ENCODE measurements at regions of chr10 and their contacts with region 1.

Region 1: DNA sequence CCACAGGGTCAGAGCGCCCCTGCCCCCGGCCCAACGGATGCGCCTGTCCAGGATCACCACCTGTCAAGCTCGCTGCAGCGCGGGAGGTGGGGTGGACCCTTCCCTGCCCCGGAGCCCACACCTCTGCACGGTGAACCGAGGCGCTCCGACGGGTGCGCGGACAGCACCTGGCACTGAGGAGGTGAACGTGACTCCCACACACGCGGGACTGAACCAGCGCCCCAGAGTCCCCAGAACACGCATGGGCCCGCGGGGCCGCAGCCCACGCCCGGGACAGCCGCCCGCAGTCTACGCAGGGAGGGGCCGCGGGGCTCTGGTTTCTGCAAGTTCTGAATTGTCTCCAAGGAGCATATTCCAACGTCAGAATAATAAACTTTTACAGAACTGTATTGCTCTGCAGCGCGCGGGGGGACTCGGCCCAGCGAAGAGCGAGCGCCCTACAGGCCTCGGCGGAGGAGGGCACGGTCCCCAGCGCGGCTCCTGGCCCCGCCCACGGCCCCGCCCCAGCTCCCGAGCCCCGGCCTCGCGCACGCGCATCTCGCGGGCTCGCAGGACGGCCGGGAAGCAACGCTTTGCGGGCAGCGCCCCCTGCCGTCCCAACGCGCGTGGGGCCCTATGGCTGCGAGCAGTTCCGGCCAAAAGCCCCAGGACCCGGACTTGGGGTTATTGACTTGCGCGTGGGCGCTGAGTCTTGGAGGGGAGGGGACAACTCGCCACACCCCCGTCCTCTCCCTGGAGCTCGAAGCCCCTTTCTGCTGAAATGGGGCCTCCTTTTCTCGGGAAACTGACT is 29.7 kb downstream of the OAT start:
- DNase-seq: peak; percentile 92
- H3K4me3 Mint-ChIP-seq: no peak overlapping the region
- H3K27ac Mint-ChIP-seq: no peak overlapping the region
- H3K4me1 Mint-ChIP-seq: peaks cover 4% of the 10 kb centered on the region
- H3K27me3 Mint-ChIP-seq: peaks cover 11% of the 10 kb centered on the region

Region 2: GRCh38 chr10:123994417-123995081 is 394.5 kb before region 1 on chr10:
- CTCF ChIA-PET with region 1: interaction called, 141 read pairs
- DNase-seq: peak; percentile 84
- H3K4me3 Mint-ChIP-seq: no peak overlapping the region
- H3K27ac Mint-ChIP-seq: no peak overlapping the region
- H3K4me1 Mint-ChIP-seq: peaks cover 5% of the 10 kb centered on the region
- H3K27me3 Mint-ChIP-seq: peaks cover 83% of the 10 kb centered on the region

Region 3: GRCh38 chr10:124279882-124280281 is 109.1 kb before region 1 on chr10:
- CTCF ChIA-PET with region 1: no interaction called
- DNase-seq: no peak
- H3K4me3 Mint-ChIP-seq: no peak overlapping the region
- H3K27ac Mint-ChIP-seq: no peak overlapping the region
- H3K4me1 Mint-ChIP-seq: no peaks in the 10 kb centered on the region
- H3K27me3 Mint-ChIP-seq: no peaks in the 10 kb centered on the region

Region 4: DNA sequence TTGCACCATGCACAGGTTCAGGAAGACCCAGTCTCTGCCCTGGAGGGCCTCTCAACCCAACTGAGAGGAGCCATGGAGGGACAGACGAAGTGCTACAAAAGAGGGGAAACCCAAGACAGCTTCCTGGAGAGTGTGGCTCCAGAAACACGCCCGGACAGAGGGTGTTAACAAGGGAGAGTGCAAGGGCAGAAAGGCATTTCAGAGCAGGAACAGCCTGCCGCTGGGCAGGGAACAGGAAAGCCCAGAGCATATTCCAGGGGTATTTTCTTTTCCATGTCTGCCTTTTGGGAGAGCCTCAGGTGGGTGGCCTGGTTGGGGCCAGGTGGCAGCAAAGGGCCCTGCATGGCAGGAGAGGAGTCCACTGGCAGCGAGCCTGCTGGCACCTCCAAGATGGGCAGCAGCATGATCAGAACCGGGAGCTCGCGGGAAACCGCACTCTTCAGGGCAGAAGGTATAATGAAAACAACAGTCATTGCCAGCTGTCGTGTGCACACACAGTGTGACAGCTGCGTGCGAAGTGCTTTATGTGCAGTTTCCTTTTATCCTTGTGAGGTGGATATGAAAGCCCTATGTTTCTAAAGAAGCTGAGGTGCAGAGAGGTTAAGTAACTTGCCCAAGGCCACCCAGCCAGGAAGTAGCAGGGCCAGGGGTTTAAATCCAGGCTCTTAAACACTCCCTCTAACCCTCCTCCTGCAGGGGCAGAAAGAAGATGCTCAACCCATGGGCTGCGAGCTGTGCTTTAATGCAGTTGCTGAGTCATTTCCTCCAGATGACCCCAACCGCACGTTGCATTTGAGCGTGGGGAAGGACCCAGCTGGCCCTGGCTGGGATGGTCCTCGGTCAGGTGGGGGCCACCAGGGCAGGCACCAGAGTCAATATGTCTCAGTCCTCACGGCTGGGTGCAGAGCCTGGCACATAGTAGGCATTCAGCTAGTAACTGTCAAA is 98.9 kb before region 1 on chr10:
- CTCF ChIA-PET with region 1: interaction called, 24 read pairs
- DNase-seq: no peak
- H3K4me3 Mint-ChIP-seq: no peak overlapping the region
- H3K27ac Mint-ChIP-seq: no peak overlapping the region
- H3K4me1 Mint-ChIP-seq: peaks cover 3% of the 10 kb centered on the region
- H3K27me3 Mint-ChIP-seq: no peaks in the 10 kb centered on the region

Region 5: GRCh38 chr10:124296121-124296812 is 92.8 kb before region 1 on chr10:
- CTCF ChIA-PET with region 1: interaction called, 24 read pairs
- DNase-seq: no peak
- H3K4me3 Mint-ChIP-seq: no peak overlapping the region
- H3K27ac Mint-ChIP-seq: no peak overlapping the region
- H3K4me1 Mint-ChIP-seq: no peaks in the 10 kb centered on the region
- H3K27me3 Mint-ChIP-seq: peaks cover 5% of the 10 kb centered on the region

Region 6: DNA sequence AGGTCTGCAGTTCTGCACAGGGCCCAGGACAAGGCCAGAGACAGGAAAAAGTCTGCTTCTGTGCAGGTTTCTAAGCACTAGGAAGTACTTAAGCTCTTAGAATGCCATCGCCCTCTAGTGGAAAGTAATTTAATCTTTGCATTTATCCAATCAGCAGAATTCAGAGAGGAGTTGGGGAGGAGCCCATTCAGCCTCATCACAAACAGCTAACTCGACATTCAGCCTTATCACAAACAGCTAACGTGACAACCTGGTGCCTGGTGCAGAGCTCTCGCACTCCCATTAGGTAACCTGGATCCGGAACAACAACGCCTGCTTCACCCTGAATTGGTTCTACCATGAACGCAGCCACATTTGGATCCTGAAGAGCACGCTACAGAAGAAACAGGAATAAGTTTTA is 14.5 kb after region 1 on chr10:
- CTCF ChIA-PET with region 1: interaction called, 11 read pairs
- DNase-seq: peak; percentile 47
- H3K4me3 Mint-ChIP-seq: no peak overlapping the region
- H3K27ac Mint-ChIP-seq: peak overlapping the region; percentile 69
- H3K4me1 Mint-ChIP-seq: peaks cover 10% of the 10 kb centered on the region
- H3K27me3 Mint-ChIP-seq: no peaks in the 10 kb centered on the region

Region 7: DNA sequence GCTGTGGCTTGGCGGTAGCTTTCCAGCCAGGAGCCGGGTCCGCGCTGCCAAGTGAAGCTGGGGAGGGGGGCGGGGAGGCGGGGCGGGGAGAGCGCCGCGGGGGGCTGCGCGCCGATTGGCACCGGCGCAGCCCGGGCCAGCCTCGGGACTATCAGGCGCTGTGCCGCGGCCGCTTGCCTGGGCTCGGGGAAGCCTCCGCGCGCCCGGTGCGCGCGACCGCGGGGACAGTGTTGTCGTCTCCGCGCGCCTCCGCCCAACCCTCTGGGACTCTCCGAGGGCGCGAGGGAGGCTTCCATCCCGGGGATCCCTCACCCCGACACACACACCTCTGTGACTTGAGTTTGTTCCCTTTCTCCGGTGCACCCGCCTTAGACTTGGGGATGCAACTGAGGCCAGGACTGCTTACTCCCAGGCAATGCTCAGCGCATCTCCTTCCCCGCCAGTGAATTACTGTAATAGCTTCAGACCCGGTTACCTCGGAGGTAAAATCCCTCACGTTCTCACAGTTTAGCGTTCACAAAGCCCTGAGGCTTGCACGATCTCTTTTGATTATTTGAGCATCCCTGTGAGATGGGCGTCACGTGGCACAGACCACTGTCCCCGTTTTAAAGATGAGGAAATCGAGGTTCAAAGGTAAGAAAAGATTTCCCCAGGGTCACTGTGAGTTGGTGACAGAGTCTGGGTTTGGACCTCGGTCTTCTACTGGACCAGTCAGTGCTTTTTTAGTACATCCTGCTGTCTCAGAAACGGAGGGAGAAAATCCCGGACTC is 61.2 kb after region 1 on chr10 and contains the start of gene NKX1-2:
- CTCF ChIA-PET with region 1: no interaction called
- DNase-seq: no peak
- H3K4me3 Mint-ChIP-seq: peak within 1 kb of the TSS; percentile 21
- H3K27ac Mint-ChIP-seq: no peak within 1 kb of the TSS
- H3K4me1 Mint-ChIP-seq: peaks cover 20% of the 10 kb centered on the region
- H3K27me3 Mint-ChIP-seq: peaks cover 97% of the 10 kb centered on the region